ENCODE measurements at regions of chr9 and their contacts with region 1.

Region 1: DNA sequence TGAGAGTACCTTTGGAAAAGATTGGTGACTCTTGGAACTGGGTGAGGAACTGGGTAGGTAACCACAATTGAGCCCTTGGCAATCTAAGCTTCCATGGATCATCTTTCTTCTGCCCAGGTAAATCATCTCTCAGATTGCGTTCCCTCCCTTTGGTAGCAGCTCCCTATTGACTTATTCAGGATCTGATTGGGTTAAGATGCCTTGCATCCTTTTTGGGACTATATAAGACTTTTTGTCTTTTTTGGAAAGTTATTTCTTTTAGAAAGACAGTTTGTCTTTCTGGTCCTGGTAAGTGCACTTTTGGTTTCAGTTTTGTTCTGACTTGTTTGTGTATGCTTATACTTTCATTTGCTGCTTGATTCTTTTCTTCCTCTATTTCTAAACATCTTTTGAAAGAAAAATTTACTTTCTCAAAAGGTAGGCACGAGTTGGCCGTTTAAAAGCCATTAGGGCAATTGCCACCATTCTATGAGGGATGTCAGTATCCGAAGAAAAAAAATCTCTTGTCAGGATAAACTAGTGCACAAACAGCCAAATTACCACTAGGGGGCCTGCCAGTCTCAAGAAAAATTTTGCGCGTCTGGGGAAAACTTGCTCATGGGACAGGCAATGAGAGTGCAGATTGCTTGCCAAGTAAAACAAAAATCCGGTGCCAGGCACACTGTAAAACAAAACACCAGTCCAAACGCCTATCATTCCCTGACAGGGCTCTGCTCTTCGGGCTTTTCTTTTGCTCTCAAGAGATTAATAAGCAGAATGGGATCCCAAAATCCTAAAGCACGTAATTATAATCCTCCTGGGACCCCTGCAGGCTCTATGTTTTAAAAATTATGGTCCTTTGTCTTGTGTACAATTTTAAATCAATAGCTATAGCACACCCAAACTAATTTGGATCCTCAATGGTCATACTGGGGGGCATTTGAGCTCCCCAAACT is 12.8 kb downstream of the OR1J1 start:
- DNase-seq: peak; percentile 67
- ATAC-seq: peak; percentile 87 to 97

Region 2: DNA sequence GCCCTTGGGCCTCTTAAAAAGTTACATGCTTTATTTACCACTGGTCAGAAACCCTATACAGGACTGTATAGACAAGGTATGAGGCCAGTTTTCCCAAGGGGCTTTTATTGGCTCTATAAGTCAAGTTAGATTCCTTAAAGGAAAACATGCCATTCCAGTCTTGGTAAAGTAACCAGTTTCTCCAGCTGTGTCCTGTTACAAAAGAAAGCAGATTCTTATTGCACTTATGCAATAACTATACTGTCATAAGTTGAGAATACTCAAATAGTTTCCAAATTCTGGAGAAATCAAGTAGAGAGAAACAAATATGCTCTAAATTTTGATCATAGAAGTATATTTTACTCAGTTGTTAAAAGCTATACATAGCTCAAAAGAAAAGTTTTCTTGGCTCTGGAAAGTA is 46.9 kb before region 1 on chr9:
- intact Hi-C with region 1: no loop called
- DNase-seq: no peak
- ATAC-seq: no peak

Region 3: DNA sequence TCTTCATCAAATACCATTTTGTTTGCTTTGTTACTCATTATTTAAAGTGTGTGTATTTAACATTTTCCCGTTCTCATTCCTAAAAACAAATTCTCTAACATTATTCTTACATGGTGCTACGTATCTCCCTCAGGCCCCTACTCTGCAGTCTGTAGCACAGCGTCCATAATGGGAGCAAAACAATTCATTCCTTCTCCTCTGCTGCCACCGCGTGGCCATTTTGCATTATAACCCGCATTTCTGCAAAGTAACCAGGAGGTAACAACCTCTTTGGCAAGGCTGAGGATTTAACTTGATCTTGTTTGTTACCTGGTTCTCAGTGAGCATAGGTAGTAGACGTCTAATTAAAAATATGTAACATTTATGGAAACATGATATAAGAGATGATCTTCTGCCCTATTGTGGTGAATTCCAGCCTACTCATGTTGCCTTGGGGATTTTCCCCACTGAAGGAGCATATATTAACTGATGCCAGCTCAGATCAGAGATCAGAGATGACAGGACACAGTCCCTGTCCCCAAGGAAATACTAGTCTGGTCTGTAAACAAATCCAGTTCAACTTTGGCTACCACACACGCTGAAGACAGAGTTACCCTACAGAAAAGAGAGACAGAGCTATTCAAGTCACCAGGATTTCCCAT is 345.5 kb after region 1 on chr9:
- intact Hi-C with region 1: loop called (anchors 1 to 5 kb)
- DNase-seq: peak; percentile 66
- ATAC-seq: peak; percentile 90 to 91